ENCODE measurements at regions of chr12 and their contacts with region 1.

Region 1: GRCh38 chr12:116703214-116703795 is 34.6 kb downstream of the SPRING1 start:
- DNase-seq: peak; percentile 76
- H3K4me3 Mint-ChIP-seq: no peak overlapping the region
- H3K27ac Mint-ChIP-seq: no peak overlapping the region
- H3K4me1 Mint-ChIP-seq: peaks cover 18% of the 10 kb centered on the region
- H3K27me3 Mint-ChIP-seq: no peaks in the 10 kb centered on the region
- CTCF ChIP-seq: peak; percentile 94

Region 2: GRCh38 chr12:116880817-116881324 is 177.6 kb after region 1 on chr12:
- CTCF ChIA-PET with region 1: interaction called, 7 read pairs
- intact Hi-C with region 1: loop called (anchors 1 kb)
- DNase-seq: peak; percentile 61
- H3K4me3 Mint-ChIP-seq: peak overlapping the region; percentile 65
- H3K27ac Mint-ChIP-seq: no peak overlapping the region
- H3K4me1 Mint-ChIP-seq: peaks cover 30% of the 10 kb centered on the region
- H3K27me3 Mint-ChIP-seq: peaks cover 84% of the 10 kb centered on the region
- CTCF ChIP-seq: no peak

Region 3: GRCh38 chr12:116955382-116956021 is 252.2 kb after region 1 on chr12:
- CTCF ChIA-PET with region 1: interaction called, 10 read pairs
- intact Hi-C with region 1: loop called (anchors 1 kb)
- DNase-seq: peak; percentile 72
- H3K4me3 Mint-ChIP-seq: no peak overlapping the region
- H3K27ac Mint-ChIP-seq: peak overlapping the region; percentile 69
- H3K4me1 Mint-ChIP-seq: peaks cover 28% of the 10 kb centered on the region
- H3K27me3 Mint-ChIP-seq: no peaks in the 10 kb centered on the region
- CTCF ChIP-seq: no peak

Region 4: DNA sequence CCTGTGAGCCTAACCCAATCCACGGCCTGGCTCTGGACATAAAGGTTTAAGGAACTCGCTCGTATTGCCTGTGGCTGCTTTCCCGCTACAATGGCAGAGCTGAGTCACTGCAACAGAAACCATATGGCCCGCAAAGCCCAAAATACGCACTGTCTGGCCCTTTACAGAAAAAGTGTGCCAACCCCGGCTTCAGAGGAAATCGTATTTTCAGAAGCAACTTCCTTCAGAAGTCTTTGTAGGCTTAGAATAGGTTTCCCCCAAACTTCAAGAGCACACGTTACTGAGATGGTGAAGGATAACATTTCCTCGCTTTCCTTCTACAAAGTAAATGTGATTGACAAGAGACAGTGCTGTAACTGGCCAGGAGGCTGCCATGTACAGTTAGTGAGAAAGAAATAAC is 430.8 kb after region 1 on chr12:
- CTCF ChIA-PET with region 1: no interaction called
- intact Hi-C with region 1: loop called (anchors 10 kb)
- DNase-seq: no peak
- H3K4me3 Mint-ChIP-seq: no peak overlapping the region
- H3K27ac Mint-ChIP-seq: no peak overlapping the region
- H3K4me1 Mint-ChIP-seq: no peaks in the 10 kb centered on the region
- H3K27me3 Mint-ChIP-seq: no peaks in the 10 kb centered on the region
- CTCF ChIP-seq: no peak

Measured in Calu3 (cell line).